Mammary epithelial cell (primary cell): ENCODE measurements at regions of chr7 and their contacts with region 1.

Region 1: GRCh38 chr7:128209229-128210035 is 31.6 kb upstream of the LEP start:
- DNase-seq: peak; percentile 60
- H3K4me3 ChIP-seq: no peak overlapping the region
- H3K27ac ChIP-seq: no peak overlapping the region
- H3K4me1 ChIP-seq: peaks cover 11% of the 10 kb centered on the region
- H3K27me3 ChIP-seq: no peaks in the 10 kb centered on the region
- CTCF ChIP-seq: peak; percentile 98 to 99

Region 2: DNA sequence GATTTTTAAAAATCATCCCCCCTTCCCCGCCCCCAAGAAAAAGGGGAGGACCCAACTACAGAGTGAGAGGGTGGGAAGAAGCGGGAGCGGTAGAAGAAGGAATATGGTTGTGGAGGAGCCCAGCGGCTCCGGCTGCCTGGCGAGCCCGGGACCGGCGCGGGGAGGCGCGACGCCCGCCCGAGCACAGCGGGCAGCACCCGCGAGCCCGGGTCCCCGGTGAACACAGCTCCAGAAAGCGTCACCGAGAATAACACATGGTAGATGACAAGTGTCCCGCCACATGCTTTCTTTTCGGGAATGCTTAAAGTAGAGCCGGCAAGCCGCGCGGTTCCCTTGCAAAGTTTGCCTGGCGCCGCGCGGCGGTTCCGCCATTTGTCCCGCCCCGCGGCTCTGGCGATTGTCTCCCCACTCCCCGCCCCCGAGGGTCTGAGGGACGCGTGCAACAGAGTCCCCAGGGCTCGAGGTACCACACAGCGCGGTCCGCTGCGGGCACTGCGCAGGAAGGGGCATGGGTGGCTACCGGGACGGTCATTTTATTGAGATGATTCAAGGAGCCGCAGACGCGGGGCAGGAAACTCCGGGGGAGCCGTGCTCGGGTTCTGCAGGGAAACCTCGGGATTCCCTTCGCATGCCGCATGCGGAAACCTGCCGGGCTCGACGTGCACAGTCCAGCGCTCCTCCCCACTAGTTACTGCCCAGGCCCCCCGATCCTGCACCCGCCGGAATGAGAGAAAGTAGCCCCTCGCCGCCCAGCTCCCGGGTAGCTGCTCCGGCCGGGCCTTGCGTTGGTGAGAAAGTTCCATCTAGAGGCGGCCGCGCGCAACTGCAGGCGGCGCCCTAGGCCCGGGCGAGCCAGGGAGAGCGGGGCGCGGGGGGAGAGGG is 955.9 kb before region 1 on chr7:
- CTCF ChIA-PET with region 1: no interaction called
- dilution Hi-C with region 1: no loop called
- in situ Hi-C with region 1: no loop called
- intact Hi-C with region 1: loop called (anchors 10 kb)
- DNase-seq: peak; percentile 54
- H3K4me3 ChIP-seq: peak overlapping the region; percentile 72 to 88 (median 80)
- H3K27ac ChIP-seq: no peak overlapping the region
- H3K4me1 ChIP-seq: peaks cover 22% of the 10 kb centered on the region
- H3K27me3 ChIP-seq: peaks cover 27% of the 10 kb centered on the region
- CTCF ChIP-seq: peak; percentile 65 to 93

Region 3: GRCh38 chr7:127585044-127585953 is 624.1 kb before region 1 on chr7 and contains the start of gene GCC1:
- CTCF ChIA-PET with region 1: interaction called, 3 read pairs
- dilution Hi-C with region 1: no loop called
- in situ Hi-C with region 1: no loop called
- intact Hi-C with region 1: loop called (anchors 2 kb)
- DNase-seq: peak; percentile 81
- H3K4me3 ChIP-seq: peak within 1 kb of the TSS; percentile 54 to 73 (median 69)
- H3K27ac ChIP-seq: peak within 1 kb of the TSS; percentile 70
- H3K4me1 ChIP-seq: peaks cover 24% of the 10 kb centered on the region
- H3K27me3 ChIP-seq: no peaks in the 10 kb centered on the region
- CTCF ChIP-seq: no peak
- total RNA-seq, gene GCC1: 22.3 to 25.4 TPM

Region 4: GRCh38 chr7:127717502-127718339 is 491.7 kb before region 1 on chr7:
- CTCF ChIA-PET with region 1: no interaction called
- dilution Hi-C with region 1: loop called (anchors 25 kb)
- in situ Hi-C with region 1: loop called (anchors 10 to 25 kb)
- intact Hi-C with region 1: no loop called
- DNase-seq: peak; percentile 64
- H3K4me3 ChIP-seq: no peak overlapping the region
- H3K27ac ChIP-seq: peak overlapping the region; percentile 16
- H3K4me1 ChIP-seq: peaks cover 3% of the 10 kb centered on the region
- H3K27me3 ChIP-seq: no peaks in the 10 kb centered on the region
- CTCF ChIP-seq: no peak

Region 5: DNA sequence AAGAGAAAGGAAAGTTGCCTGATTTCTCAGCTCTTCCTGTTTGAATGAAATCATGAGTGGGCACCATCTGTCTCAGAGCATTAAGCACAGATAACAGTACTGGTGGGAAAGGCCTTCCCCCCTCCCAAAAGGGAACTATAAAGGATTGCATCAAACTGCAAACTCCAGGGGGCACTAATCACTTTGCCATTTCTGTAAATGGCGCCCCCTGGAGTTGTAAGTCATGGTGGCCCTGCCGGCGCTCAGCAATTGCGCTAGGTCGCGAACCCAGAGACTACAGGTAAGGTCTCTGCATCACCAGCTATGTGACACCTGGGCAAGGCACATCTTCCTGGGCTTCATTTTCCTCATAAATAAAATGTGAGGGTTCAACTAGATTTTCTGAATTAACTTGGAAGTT is 189.3 kb before region 1 on chr7:
- CTCF ChIA-PET with region 1: no interaction called
- dilution Hi-C with region 1: no loop called
- in situ Hi-C with region 1: no loop called
- intact Hi-C with region 1: loop called (anchors 5 kb)
- DNase-seq: no peak
- H3K4me3 ChIP-seq: no peak overlapping the region
- H3K27ac ChIP-seq: no peak overlapping the region
- H3K4me1 ChIP-seq: peaks cover 52% of the 10 kb centered on the region
- H3K27me3 ChIP-seq: no peaks in the 10 kb centered on the region
- CTCF ChIP-seq: peak; percentile 32 to 36

Region 6: GRCh38 chr7:128135515-128136214 is 73.8 kb before region 1 on chr7:
- CTCF ChIA-PET with region 1: interaction called, 19 read pairs
- dilution Hi-C with region 1: no loop called
- in situ Hi-C with region 1: loop called (anchors 5 kb)
- intact Hi-C with region 1: loop called (anchors 1 kb)
- DNase-seq: peak; percentile 45
- H3K4me3 ChIP-seq: peak overlapping the region; percentile 62 to 66 (median 64)
- H3K27ac ChIP-seq: no peak overlapping the region
- H3K4me1 ChIP-seq: peaks cover 13% of the 10 kb centered on the region
- H3K27me3 ChIP-seq: no peaks in the 10 kb centered on the region
- CTCF ChIP-seq: peak; percentile 57 to 63

Region 7: DNA sequence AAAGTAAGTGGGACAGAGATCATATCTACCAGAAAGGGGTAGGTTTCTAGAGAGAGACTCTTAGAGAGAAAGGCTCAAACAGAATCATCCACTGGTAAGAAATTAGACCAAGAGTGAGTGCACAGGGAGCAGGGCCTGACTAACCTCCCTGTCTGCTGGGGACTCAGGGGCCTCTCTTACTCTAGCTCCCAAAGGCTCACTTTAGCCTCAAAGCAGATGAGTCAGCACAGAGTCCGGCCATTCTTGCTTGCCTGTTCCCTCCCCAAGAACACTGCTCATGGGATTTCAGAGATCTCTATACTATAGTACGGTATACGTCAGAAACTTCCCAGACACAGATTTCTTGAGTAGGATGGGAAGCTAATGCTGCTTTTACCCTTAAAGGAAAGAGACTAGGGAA is 101.6 kb after region 1 on chr7:
- CTCF ChIA-PET with region 1: no interaction called
- dilution Hi-C with region 1: no loop called
- in situ Hi-C with region 1: no loop called
- intact Hi-C with region 1: no loop called
- DNase-seq: no peak
- H3K4me3 ChIP-seq: no peak overlapping the region
- H3K27ac ChIP-seq: no peak overlapping the region
- H3K4me1 ChIP-seq: no peaks in the 10 kb centered on the region
- H3K27me3 ChIP-seq: no peaks in the 10 kb centered on the region
- CTCF ChIP-seq: no peak

Region 8: GRCh38 chr7:128322040-128322643 is 112.7 kb after region 1 on chr7:
- CTCF ChIA-PET with region 1: no interaction called
- dilution Hi-C with region 1: no loop called
- in situ Hi-C with region 1: no loop called
- intact Hi-C with region 1: loop called (anchors 1 kb)
- DNase-seq: peak; percentile 37
- H3K4me3 ChIP-seq: no peak overlapping the region
- H3K27ac ChIP-seq: no peak overlapping the region
- H3K4me1 ChIP-seq: no peaks in the 10 kb centered on the region
- H3K27me3 ChIP-seq: no peaks in the 10 kb centered on the region
- CTCF ChIP-seq: peak; percentile 39 to 66

Region 9: DNA sequence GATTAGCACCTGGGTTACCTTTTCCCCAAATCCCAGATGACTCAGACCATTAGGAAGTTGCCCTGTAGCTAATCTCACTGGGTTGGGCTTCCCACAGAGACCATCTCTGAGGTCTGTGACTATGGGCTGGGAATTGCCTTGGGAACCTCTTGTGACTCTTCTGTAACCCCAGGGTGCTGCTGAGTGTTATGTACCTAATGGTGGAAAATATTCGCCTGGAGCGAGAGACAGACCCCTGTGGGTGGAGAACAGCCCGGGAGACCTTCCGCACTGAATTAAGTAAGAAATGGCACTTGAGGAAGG is 1244.8 kb after region 1 on chr7:
- CTCF ChIA-PET with region 1: no interaction called
- dilution Hi-C with region 1: no loop called
- in situ Hi-C with region 1: no loop called
- intact Hi-C with region 1: no loop called
- DNase-seq: peak; percentile 74
- H3K4me3 ChIP-seq: no peak overlapping the region
- H3K27ac ChIP-seq: peak overlapping the region; percentile 18
- H3K4me1 ChIP-seq: peaks cover 25% of the 10 kb centered on the region
- H3K27me3 ChIP-seq: no peaks in the 10 kb centered on the region
- CTCF ChIP-seq: no peak